WTC11 (cell line): ENCODE measurements at regions of chr9 and their contacts with region 1.

Region 1: DNA sequence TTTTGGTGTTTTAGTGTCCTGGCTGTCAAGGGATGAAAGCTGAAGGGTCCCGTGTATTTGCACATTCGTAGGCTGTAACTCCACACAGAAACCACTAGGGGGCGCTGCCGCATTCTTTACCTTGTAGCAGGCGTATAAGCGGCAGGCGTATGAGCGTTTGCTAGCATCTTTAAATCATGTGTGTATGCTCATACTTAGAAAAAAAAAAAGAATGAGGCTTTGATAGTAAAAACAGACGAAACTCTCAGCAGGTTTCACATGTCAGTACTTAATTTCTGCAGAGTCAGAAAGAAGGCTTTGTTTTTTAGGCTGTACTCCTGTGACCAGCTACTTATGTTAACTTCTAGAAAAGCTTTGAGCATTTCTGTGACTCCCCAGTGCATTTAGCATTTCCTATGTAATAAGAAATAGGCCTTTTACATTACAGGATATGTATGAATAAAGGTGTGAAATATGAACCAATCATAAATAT is 218.8 kb upstream of the ADAMTSL1 start:
- DNase-seq: peak; percentile 80
- ATAC-seq: peak; percentile 87
- H3K4me3 Mint-ChIP-seq: no peak overlapping the region
- H3K27ac Mint-ChIP-seq: no peak overlapping the region
- H3K4me1 Mint-ChIP-seq: no peaks in the 10 kb centered on the region
- H3K27me3 Mint-ChIP-seq: no peaks in the 10 kb centered on the region
- CTCF ChIP-seq: peak; percentile 91

Region 2: DNA sequence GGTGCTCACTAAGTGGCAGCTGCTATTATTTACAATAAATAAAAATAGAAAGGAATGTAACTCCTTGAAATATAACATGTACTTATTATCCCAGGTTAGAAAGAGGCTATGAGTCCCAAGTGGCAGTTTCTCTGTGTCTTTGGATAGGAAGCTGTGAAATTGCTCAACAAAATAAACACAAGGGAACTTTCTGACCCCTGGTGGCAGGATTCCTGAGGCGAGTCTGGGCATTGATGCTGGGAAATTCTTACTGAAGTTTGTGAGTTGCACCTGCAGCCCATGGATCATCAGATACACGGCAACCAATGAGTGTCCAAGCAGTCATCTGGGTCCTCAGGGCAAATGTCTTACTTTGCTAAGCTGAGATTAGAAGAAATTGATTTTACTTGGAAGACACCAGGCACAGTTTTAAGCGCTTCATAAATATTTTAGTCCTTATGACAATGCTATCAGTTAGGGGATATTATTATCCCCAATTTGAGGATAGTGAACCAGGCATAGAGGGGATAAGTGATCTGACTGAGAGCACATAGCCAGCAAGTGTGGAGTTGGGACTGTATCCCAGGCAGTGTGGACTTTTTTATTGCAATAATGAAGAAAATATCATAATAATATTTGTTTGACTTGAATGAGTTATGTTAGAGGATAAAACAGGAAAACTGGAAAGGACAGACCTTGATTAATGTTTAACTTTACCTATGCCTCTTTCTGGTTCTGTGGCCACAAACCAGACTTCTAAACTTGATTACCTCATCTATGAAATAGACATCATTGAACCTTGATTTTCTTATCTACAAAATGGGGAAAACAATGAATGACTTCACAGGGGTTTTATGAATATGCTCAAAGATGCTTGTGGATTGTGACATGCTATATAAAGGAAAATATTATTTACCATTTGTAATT is 46.8 kb before region 1 on chr9:
- CTCF ChIA-PET with region 1: interaction called, 12 read pairs
- POLR2A ChIA-PET with region 1: no interaction called
- DNase-seq: peak; percentile 62
- ATAC-seq: peak; percentile 86
- H3K4me3 Mint-ChIP-seq: no peak overlapping the region
- H3K27ac Mint-ChIP-seq: no peak overlapping the region
- H3K4me1 Mint-ChIP-seq: peaks cover 17% of the 10 kb centered on the region
- H3K27me3 Mint-ChIP-seq: no peaks in the 10 kb centered on the region
- CTCF ChIP-seq: 0 out of 2 replicates have a peak, but pooled peaks have one; percentile 23

Region 3: GRCh38 chr9:18396102-18396728 is 141.0 kb after region 1 on chr9:
- CTCF ChIA-PET with region 1: interaction called, 10 read pairs
- POLR2A ChIA-PET with region 1: no interaction called
- DNase-seq: no peak
- ATAC-seq: peak; percentile 47; the same call in 1 of the 2 replicates
- H3K4me3 Mint-ChIP-seq: no peak overlapping the region
- H3K27ac Mint-ChIP-seq: no peak overlapping the region
- H3K4me1 Mint-ChIP-seq: peaks cover 8% of the 10 kb centered on the region
- H3K27me3 Mint-ChIP-seq: no peaks in the 10 kb centered on the region
- CTCF ChIP-seq: no peak

Region 4: DNA sequence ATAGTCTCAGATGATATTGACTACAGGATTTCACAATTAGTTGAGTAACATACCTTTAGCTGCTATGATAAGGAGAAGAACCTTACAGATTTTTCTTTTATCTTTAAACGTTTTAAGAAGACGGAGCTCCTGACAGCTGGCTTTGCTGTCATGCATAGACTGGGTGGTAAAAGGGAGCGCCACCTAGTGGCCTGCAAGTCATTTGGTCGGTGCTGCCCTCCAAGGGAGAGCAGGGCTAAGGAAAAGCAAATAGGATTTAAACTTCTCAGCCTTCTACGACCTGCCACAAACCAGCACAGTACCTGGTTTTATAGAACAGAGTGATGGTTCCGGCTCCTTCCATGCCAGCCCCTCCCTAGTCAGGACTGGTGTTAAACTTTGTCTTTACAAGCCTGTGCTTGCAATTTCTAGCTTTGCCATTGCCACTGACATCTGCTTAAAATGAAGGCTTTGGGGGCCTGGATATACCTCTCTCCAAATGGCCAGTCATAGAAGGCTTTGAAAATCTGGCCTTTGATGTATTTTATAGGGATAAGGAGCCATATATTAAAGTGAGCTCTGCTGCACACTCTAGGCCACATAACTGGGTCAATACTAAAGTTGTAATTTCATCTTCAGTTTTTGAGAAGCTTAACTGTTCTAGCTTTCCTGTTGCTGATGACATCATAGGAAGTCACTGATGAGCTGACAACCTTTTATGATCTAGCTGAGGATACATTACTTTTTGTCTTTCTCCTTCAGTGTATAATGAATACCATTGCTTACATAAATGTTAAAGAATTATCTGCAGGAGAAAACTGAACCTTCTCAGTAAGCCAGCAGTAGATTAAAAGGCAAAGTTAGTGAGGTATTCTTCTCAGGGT is 187.7 kb after region 1 on chr9:
- CTCF ChIA-PET with region 1: interaction called, 36 read pairs
- POLR2A ChIA-PET with region 1: no interaction called
- DNase-seq: peak; percentile 78
- ATAC-seq: peak; percentile 87
- H3K4me3 Mint-ChIP-seq: no peak overlapping the region
- H3K27ac Mint-ChIP-seq: no peak overlapping the region
- H3K4me1 Mint-ChIP-seq: peaks cover 12% of the 10 kb centered on the region
- H3K27me3 Mint-ChIP-seq: peaks cover 13% of the 10 kb centered on the region
- CTCF ChIP-seq: peak; percentile 81

Region 5: DNA sequence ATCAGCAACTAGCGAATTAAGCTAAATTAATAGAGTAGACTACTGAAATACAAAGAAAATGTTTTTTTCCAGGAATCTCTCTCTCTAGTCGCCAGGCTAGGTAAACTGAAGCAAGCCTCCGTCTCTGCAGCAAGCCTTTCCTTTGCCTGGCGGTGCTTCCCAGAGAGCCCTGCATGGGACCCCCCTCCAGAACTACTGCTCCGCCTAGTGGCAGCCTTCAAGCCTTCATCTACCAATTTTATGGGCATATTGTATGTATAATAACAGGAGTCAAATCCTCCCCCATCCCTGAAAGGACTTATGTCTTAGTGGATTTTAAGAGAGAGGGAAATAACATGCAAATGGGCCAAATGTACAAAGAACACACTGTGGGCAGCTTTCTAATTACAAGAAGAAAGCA is 535.9 kb after region 1 on chr9:
- CTCF ChIA-PET with region 1: interaction called, 14 read pairs
- POLR2A ChIA-PET with region 1: no interaction called
- DNase-seq: peak; percentile 80
- ATAC-seq: peak; percentile 99
- H3K4me3 Mint-ChIP-seq: no peak overlapping the region
- H3K27ac Mint-ChIP-seq: no peak overlapping the region
- H3K4me1 Mint-ChIP-seq: no peaks in the 10 kb centered on the region
- H3K27me3 Mint-ChIP-seq: no peaks in the 10 kb centered on the region
- CTCF ChIP-seq: peak; percentile 71

Region 6: GRCh38 chr9:18824095-18824666 is 569.0 kb after region 1 on chr9:
- CTCF ChIA-PET with region 1: interaction called, 14 read pairs
- POLR2A ChIA-PET with region 1: no interaction called
- DNase-seq: no peak
- ATAC-seq: peak; percentile 69
- H3K4me3 Mint-ChIP-seq: no peak overlapping the region
- H3K27ac Mint-ChIP-seq: no peak overlapping the region
- H3K4me1 Mint-ChIP-seq: peaks cover 32% of the 10 kb centered on the region
- H3K27me3 Mint-ChIP-seq: no peaks in the 10 kb centered on the region; the same call in 1 of the 2 replicates
- CTCF ChIP-seq: no peak

Region 7: DNA sequence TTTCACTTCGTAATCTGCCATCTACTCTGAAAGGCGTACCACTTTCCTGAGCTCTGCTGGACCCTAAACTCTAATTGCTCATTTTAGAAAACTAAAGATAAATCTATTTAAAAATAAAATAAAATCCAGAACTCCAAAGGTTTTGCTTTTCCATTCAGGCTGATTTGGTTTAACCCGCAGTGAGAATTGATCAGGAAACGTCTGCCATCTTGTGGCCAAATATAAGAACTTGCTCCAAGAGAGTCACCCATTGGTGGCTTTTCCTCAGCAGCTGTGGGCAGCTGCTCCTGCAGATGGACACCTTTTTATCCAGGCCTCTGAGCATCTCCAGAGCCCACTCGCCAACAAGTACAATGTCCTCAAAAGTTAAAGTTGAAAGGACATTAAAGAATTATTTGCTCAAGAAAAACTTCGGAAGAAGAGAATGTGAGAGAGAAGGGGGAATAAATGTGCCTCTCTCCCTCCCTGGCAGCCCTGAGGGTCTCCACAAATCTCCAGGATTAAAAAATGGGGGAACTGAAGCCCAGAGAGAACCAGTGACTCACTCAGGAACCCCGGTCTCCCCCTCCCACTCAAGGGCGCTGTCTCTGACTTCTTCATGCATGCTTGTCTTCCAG is 773.7 kb after region 1 on chr9:
- CTCF ChIA-PET with region 1: interaction called, 10 read pairs
- POLR2A ChIA-PET with region 1: no interaction called
- DNase-seq: no peak
- ATAC-seq: peak; percentile 83
- H3K4me3 Mint-ChIP-seq: no peak overlapping the region
- H3K27ac Mint-ChIP-seq: no peak overlapping the region
- H3K4me1 Mint-ChIP-seq: no peaks in the 10 kb centered on the region
- H3K27me3 Mint-ChIP-seq: no peaks in the 10 kb centered on the region; the same call in 1 of the 2 replicates
- CTCF ChIP-seq: peak; percentile 55